ENCODE measurements at regions of chr1 and their contacts with region 1.

Region 1: GRCh38 chr1:234342774-234343173 is 30.5 kb upstream of the COA6 start:
- DNase-seq: no peak
- ATAC-seq: no peak
- H3K4me3 ChIP-seq: no peak overlapping the region
- H3K27ac ChIP-seq: no peak overlapping the region
- H3K4me1 ChIP-seq: no peaks in the 10 kb centered on the region
- H3K27me3 ChIP-seq: no peaks in the 10 kb centered on the region
- CTCF ChIP-seq: no peak

Region 2: DNA sequence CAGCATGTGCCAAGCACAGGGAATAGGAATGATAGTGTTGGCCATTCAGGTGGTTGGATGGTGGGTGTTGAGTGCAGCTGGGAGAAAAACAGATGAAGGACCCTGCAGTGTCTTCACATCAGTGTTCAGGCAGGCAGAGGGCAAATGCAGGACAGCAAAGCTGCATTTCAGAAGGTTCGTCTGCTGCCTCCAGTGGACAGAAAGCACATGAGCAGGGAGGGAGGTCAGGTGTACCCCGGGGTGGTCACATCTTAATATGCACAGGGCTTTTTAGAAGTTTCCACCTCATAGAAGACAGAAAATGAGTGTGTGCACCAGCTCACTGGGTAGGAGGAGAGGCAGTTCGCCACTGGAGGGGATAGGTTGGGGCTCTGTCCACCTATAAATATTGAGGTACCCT is 253.4 kb before region 1 on chr1:
- intact Hi-C with region 1: no loop called
- DNase-seq: no peak
- ATAC-seq: no peak
- H3K4me3 ChIP-seq: no peak overlapping the region
- H3K27ac ChIP-seq: no peak overlapping the region
- H3K4me1 ChIP-seq: no peaks in the 10 kb centered on the region
- H3K27me3 ChIP-seq: no peaks in the 10 kb centered on the region
- CTCF ChIP-seq: no peak

Region 3: DNA sequence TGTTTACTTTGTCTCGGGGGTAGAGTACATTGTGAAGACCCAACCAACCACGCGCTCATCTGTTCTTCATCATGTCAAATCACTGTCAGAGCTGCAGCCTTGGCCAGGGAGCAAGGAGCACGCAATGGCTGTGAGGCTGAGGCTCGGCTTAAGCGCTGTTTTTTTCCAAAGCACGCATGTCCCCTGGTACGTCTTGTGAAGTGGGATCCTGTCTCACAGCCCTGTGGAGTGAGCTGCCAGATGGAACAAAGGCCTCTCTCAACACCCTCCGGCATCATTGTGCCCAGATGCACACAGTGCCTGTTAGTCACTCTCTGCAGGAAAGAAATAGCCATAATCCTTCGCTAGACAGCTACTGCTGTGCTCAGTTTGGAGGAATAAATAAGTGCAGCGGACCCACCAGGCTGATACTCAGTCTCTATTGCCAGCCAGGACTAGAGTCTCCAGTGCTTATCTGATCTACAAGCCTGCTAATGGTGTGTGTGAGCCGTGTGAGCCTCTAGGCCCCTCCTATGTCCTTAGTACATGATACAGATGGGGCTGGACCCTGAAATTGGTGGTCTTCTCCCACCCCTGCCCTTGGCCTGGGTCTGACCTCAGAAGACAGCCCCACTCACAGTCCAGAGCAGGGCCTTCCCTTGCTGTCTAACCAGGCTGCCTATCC is 60.8 kb before region 1 on chr1:
- intact Hi-C with region 1: loop called in 1 of 3 experiments (anchors 10 kb)
- DNase-seq: no peak
- ATAC-seq: no peak
- H3K4me3 ChIP-seq: no peak overlapping the region
- H3K27ac ChIP-seq: no peak overlapping the region
- H3K4me1 ChIP-seq: no peaks in the 10 kb centered on the region
- H3K27me3 ChIP-seq: no peaks in the 10 kb centered on the region
- CTCF ChIP-seq: no peak